Posterior cingulate gyrus (tissue), 11 donors: ENCODE measurements at regions of chr3 and their contacts with region 1.

Region 1: GRCh38 chr3:62558549-62559112 is 185.3 kb upstream of the FEZF2 start:
- DNase-seq: peak in 1 of 10 donors; percentile 18

Region 2: GRCh38 chr3:62201438-62202035 is 357.1 kb before region 1 on chr3:
- intact Hi-C with region 1: loop called (anchors 2 kb)
- DNase-seq: no peak

Region 3: DNA sequence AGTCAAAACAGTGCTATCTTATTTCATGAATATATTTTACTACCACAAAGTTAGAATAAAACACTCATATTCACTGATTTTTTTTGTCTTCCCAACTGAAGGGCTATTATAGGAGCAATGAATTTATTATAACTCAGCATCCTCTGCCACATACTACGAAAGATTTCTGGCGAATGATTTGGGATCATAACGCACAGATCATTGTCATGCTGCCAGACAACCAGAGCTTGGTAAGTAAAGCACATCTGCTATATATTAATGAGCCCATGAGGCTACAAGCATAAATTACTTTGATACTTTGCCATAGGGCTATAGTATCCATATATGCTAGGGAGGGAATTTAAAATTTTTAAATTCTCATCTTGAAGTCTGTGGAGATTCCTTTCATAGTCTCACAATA is 281.2 kb before region 1 on chr3:
- intact Hi-C with region 1: no loop called
- DNase-seq: no peak

Region 4: GRCh38 chr3:62332835-62333244 is 225.8 kb before region 1 on chr3:
- intact Hi-C with region 1: loop called (anchors 2 kb)
- DNase-seq: no peak

Region 5: DNA sequence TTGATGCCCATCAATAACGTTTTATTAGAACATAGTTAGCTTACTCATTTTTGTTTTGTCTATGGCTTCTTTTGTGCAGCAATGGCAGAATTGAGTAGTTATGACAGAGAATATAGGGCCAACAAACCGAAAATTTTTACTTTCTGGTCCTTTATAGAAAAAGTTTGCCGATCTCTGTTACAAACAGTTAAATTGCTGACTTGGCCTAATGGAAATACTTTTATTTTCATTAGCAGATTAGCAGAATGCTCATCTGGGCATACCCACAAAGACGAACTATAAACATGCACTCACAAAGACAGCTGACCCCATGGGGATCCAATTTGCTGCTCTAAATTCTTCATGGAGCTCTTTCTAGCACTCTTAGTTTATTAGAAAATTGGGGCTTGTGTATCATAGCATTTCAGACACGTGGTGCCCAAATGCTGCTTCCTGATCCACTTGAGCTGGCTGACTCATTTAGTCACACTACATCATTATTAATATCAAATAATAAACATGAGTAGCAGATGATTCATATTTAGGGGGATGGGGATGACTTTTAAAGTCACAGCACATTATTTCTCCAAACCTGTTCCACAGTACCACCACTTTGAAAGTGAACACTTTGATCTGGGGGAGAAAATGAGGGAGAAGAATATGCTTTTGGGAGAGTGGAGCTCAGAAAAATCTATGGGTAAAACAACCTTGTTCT is 42.8 kb after region 1 on chr3:
- intact Hi-C with region 1: no loop called
- DNase-seq: no peak